ENCODE measurements at regions of chr19 and their contacts with region 1.

Region 1: GRCh38 chr19:16628183-16628983 is at the start of gene MED26:
- DNase-seq: peak; percentile 90 to 99 (median 93)

Region 2: GRCh38 chr19:16542045-16542909 is 86.1 kb before region 1 on chr19 and contains the start of gene CHERP:
- intact Hi-C with region 1: loop called (anchors 1 kb)
- DNase-seq: peak; percentile 90 to 99 (median 92)

Region 3: DNA sequence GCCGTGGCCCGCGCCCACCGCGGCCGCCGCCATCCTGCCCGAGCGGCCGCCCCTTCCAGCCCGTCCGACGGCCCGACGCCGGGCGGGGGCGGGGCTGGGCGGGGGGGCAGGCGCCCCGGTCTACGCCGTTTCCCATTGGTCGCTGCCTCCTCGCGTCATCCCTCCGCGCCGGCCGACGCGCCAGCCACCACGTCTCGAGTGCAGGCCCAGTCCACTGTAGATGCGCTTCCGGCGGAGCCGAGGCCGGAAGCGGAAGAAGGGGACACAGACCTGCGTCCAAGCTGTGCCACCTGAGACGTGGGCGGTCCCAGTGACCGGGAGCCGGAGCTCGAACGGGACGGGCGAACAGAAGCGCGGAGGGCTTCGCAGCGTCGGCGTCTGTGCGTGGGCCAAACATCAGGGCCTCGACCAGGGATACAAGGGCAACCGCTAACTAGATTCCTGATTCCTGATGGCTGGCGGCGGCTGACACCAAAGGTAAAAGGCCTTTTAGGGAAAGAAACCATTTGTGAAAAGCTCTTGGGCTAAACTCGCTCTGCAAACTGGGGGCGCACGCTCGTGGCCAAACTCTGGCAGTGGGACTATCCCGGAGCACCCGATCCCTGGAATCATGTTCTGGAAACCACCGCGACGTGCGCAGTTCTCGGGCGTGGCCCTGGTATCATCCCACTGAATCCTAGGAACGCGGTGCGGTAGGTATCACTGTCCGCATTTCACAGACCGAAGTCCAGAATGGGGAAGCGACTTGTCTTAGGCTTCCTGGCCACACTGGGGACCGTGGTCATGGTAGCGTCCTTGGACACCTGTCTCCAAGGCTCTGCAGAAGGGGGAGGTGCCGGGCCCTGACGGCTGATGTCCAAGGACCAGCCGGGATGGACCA is 55.8 kb before region 1 on chr19 and contains the start of gene SLC35E1:
- intact Hi-C with region 1: loop called (anchors 1 kb)
- DNase-seq: peak; percentile 90 to 99 (median 92)

Region 4: DNA sequence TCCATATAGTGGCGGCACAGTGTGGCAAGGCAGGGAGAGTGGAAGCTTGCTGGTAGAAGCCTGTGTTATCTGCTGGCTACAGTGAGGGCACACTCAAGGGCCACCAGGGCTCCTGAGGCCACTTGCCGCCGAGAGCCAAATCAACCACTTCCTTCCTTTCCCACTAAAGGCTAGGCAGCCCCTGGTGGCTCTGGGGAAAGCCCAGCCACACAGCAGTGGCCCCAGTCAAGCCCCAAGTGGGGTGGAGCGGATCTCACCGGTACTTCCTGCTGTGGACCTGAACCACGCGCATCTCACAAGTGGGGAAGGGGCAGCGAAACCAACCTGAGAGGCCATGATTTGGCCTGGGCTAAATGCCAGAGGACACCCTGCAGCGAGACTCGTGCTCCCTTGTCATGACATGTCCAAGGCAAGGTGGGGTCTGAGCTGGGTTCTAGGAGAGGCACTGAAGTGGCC is 34.2 kb before region 1 on chr19:
- intact Hi-C with region 1: loop called (anchors 5 kb)
- DNase-seq: peak in 1 of 10 donors; percentile 80

Region 5: DNA sequence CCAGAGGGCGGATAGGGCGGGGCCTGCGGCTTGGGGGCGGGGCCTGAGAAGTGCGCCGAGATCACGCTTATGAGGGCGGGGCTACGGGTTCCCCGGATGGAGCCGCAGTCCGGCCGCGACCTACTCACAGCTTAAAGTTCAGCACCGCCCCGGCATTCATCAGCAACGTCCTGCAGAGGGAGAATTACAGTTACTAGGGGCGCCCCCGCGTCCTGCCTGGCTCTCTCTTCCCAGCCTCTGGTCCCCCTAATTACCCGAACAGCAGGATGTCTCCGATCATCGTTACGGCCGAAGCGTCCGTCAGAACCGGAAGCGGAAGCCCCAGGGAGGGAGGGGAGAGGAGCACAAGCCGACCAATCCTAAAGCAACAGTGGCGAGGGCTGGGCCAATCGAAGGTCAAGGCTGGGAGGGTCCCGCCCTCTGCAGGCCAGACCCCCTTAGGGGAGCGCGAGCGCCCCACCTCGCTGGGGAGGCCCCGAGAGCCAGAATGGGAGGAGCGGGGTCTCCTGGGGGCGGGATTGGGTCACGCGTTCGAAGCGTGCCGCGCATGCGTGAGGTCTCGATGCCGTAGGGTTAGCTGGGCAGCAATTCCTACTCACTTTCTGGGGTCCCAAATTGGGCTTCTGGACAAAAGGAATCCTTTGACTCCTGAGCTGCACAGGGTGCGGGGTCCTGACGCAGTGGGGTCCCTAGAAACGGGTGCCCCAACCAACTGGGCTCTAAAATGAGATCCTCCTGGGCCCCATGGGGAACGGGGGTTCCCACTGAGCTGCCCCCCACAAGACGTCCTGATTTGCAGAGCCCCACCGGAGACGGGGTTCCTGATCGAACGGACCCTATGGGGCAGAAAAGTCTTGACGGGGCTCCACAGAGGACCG is 31.7 kb after region 1 on chr19 and contains the start of gene SMIM7:
- intact Hi-C with region 1: loop called (anchors 1 kb)
- DNase-seq: peak; percentile 97 to 100 (median 99)